ENCODE measurements at regions of chr1 and their contacts with region 1.

Region 1: DNA sequence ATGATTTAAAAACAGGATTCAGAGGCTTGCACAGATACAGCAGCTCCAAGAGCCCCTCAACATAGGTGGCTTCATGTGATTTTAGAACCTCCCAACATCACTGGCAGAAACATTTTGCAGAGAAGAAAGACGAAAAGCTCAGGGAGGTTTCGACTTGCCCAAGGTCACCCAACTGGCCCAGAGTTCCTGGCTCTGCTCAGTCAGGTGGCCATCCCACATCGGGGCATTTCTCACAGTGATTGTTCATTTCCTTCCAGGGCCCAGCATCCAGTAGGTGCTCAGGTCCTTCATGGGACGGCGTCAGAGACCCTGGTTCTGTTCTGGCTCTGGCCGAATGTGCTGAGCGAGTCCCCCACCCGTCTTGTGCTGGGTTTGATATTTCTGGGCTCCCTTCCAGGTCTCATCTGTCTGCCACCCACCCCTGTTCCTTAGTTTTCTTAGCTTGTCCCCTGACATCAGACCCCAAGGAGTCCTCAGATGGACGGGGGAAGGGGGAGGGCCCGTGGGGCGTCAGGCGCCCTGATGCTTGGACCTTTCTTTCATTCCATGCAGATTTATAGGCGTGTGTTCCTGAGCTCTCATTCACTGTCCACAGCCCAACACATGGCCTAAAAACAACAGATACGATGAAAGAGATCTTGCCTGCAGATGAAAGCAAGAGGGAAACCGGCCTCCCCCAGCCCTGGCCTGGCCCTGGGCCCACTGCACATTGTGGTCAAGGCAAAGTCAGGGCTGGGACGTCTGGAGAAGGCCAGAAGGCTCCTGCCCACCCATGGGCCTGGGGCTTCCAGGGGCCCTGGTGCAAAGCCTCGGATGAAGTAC is 123.1 kb upstream of the ZBTB40 start:
- DNase-seq: no peak
- ATAC-seq: no peak
- H3K4me3 ChIP-seq: no peak overlapping the region
- H3K27ac ChIP-seq: no peak overlapping the region
- H3K4me1 ChIP-seq: no peaks in the 10 kb centered on the region
- H3K27me3 ChIP-seq: peaks cover 0 to 3% (median 0%) of the 10 kb centered on the region in 3 donors
- CTCF ChIP-seq: no peak
- POLR2A ChIP-seq: no peak

Region 2: GRCh38 chr1:24235921-24236781 is 1907.6 kb after region 1 on chr1:
- in situ Hi-C with region 1: no loop called
- intact Hi-C with region 1: loop called (anchors 10 kb)
- DNase-seq: no peak
- ATAC-seq: no peak
- H3K4me3 ChIP-seq: no peak overlapping the region
- H3K27ac ChIP-seq: no peak overlapping the region
- H3K4me1 ChIP-seq: no peaks in the 10 kb centered on the region
- H3K27me3 ChIP-seq: peaks cover 8 to 13% (median 12%) of the 10 kb centered on the region in 3 donors
- CTCF ChIP-seq: no peak
- POLR2A ChIP-seq: no peak